ENCODE measurements at regions of chr16 and their contacts with region 1.

Region 1: GRCh38 chr16:71412270-71413160 is 29.3 kb downstream of the TLE7 start:
- DNase-seq: peak; percentile 36
- ATAC-seq: peak; percentile 57
- H3K4me3 Mint-ChIP-seq: no peak overlapping the region
- H3K27ac Mint-ChIP-seq: no peak overlapping the region
- H3K4me1 Mint-ChIP-seq: peaks cover 9% of the 10 kb centered on the region
- H3K27me3 Mint-ChIP-seq: peaks cover 32% of the 10 kb centered on the region
- CTCF ChIP-seq: peak; percentile 38

Region 2: GRCh38 chr16:71373073-71373472 is 39.4 kb before region 1 on chr16:
- CTCF ChIA-PET with region 1: no interaction called
- POLR2A ChIA-PET with region 1: no interaction called
- intact Hi-C with region 1: no loop called
- DNase-seq: no peak
- ATAC-seq: no peak
- H3K4me3 Mint-ChIP-seq: no peak overlapping the region
- H3K27ac Mint-ChIP-seq: no peak overlapping the region
- H3K4me1 Mint-ChIP-seq: no peaks in the 10 kb centered on the region
- H3K27me3 Mint-ChIP-seq: peaks cover 27% of the 10 kb centered on the region
- CTCF ChIP-seq: no peak

Region 3: DNA sequence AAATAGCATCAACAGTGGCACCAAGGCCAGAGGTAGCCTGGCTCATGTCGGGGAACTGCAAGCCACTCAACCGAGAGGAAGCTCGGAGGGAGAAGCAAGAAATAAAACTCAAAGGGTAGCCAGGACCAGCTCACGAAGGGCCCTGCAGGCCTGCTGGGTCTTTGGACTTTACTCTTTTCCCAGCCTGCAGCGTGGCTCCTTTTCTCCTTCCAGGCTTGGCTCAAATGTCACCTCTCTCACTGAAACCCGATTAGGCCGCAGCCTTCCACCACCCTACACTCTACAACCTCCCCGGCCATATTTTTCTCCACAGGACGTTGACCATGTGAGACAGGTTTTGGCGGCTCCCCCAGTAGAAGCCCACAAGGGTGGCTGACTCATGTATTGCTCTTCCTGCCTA is 15.9 kb before region 1 on chr16:
- CTCF ChIA-PET with region 1: interaction called, 5 read pairs
- POLR2A ChIA-PET with region 1: interaction called, 10 read pairs
- intact Hi-C with region 1: no loop called
- DNase-seq: no peak
- ATAC-seq: no peak
- H3K4me3 Mint-ChIP-seq: no peak overlapping the region
- H3K27ac Mint-ChIP-seq: no peak overlapping the region
- H3K4me1 Mint-ChIP-seq: no peaks in the 10 kb centered on the region
- H3K27me3 Mint-ChIP-seq: peaks cover 17% of the 10 kb centered on the region
- CTCF ChIP-seq: no peak

Region 4: GRCh38 chr16:71499775-71500364 is 87.4 kb after region 1 on chr16:
- CTCF ChIA-PET with region 1: interaction called, 135 read pairs
- POLR2A ChIA-PET with region 1: interaction called, 5 read pairs
- intact Hi-C with region 1: loop called (anchors 1 kb)
- DNase-seq: no peak
- ATAC-seq: peak; percentile 81
- H3K4me3 Mint-ChIP-seq: no peak overlapping the region
- H3K27ac Mint-ChIP-seq: no peak overlapping the region
- H3K4me1 Mint-ChIP-seq: no peaks in the 10 kb centered on the region
- H3K27me3 Mint-ChIP-seq: peaks cover 24% of the 10 kb centered on the region
- CTCF ChIP-seq: no peak

Measured in activated B cell treated with CpG ODN at 0.5 μM for 24 hours (primary cell).